HCT116 (cell line): ENCODE measurements at regions of chr17 and their contacts with region 1.

Region 1: GRCh38 chr17:67475236-67475937 is 98.3 kb downstream of the PITPNC1 start:
- DNase-seq: peak; percentile 75
- ATAC-seq: peak; percentile 91
- H3K4me3 ChIP-seq: no peak overlapping the region
- H3K27ac ChIP-seq: no peak overlapping the region
- H3K4me1 ChIP-seq: peaks cover 13 to 49% of the 10 kb centered on the region in 2 experiments
- H3K27me3 ChIP-seq: no peaks in the 10 kb centered on the region
- CTCF ChIP-seq: peak; percentile 97 to 100 (median 100)
- POLR2A ChIP-seq: no peak
- RAD21 ChIP-seq: peak; percentile 98

Region 2: GRCh38 chr17:67353161-67353560 is 122.2 kb before region 1 on chr17:
- CTCF ChIA-PET with region 1: no interaction called
- POLR2A ChIA-PET with region 1: no interaction called
- RAD21 ChIA-PET with region 1: no interaction called
- intact Hi-C with region 1: no loop called
- DNase-seq: no peak
- ATAC-seq: no peak
- H3K4me3 ChIP-seq: no peak overlapping the region
- H3K27ac ChIP-seq: no peak overlapping the region
- H3K4me1 ChIP-seq: no peaks in the 10 kb centered on the region
- H3K27me3 ChIP-seq: no peaks in the 10 kb centered on the region
- CTCF ChIP-seq: no peak
- POLR2A ChIP-seq: no peak
- RAD21 ChIP-seq: no peak

Region 3: DNA sequence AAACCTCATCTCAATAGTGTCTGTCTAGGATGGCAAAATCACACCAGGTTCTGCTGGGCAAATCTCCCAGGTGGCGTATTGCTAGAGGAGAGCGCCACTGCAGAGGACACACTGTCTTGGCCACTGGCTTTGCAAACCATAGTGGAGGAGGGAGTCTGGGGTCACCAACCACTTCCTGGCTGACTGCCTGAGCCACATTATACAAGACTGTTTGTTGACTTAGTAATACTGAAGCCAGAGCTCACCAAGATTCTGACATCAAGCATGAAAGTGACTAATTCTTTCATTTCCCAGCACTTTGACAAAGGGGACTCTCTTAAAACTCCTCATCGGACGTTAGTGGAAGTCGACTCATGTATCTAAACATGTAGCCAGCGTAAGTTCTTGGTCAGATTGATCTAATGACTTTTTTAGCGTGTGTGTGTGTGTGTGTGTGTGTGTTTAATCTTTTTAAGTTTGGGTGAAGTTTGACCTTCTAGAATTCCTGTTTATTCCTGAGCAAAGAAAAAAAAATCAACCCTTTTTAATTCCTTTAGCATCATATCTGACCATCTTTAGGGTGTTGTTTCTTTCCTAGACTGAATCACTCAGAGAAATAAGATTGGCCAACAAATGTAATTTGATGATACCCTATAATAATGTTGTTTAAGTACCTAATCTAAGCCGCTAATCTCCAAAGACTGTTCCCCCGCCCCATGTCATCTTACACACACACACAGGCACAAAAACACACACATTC is 84.6 kb before region 1 on chr17:
- CTCF ChIA-PET with region 1: interaction called, 50 read pairs
- POLR2A ChIA-PET with region 1: interaction called, 4 read pairs
- RAD21 ChIA-PET with region 1: interaction called, 4 to 7 read pairs
- intact Hi-C with region 1: loop called (anchors 1 kb)
- DNase-seq: peak; percentile 89
- ATAC-seq: peak; percentile 80
- H3K4me3 ChIP-seq: peak overlapping the region in 1 of 2 experiments; percentile 36; a peak in 2 of 4 replicates
- H3K27ac ChIP-seq: peak overlapping the region; percentile 54
- H3K4me1 ChIP-seq: peaks cover 26 to 58% of the 10 kb centered on the region in 2 experiments
- H3K27me3 ChIP-seq: no peaks in the 10 kb centered on the region
- CTCF ChIP-seq: no peak
- POLR2A ChIP-seq: no peak
- RAD21 ChIP-seq: peak; percentile 36; the same call in 1 of the 2 replicates

Region 4: DNA sequence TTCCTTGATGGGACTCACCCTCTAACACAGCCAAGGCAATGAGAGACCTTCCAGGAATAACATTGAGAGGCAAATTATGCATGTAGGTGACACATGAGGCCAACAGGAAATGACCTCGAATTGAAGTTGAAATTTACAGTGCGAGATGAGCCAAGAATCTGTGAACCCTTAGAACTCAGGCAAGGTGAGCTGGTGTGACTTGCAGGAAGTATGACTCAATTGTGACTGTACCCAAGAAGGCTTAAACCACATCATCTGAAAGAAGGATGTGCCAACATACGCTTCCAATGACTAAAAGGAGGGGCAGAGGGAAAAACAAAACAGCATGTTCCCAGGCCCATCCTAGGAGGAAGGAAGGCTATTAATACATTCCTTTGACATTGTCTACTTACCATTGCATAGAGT is 53.5 kb before region 1 on chr17:
- CTCF ChIA-PET with region 1: interaction called, 10 read pairs
- POLR2A ChIA-PET with region 1: interaction called, 3 read pairs
- RAD21 ChIA-PET with region 1: interaction called, 4 to 8 read pairs
- intact Hi-C with region 1: no loop called
- DNase-seq: peak; percentile 100
- ATAC-seq: peak; percentile 90
- H3K4me3 ChIP-seq: peak overlapping the region; percentile 0 to 31; a peak in 3 of 4 replicates
- H3K27ac ChIP-seq: peak overlapping the region; percentile 95
- H3K4me1 ChIP-seq: peaks cover 72 to 92% of the 10 kb centered on the region in 2 experiments
- H3K27me3 ChIP-seq: no peaks in the 10 kb centered on the region
- CTCF ChIP-seq: no peak
- POLR2A ChIP-seq: no peak
- RAD21 ChIP-seq: peak; percentile 57

Region 5: DNA sequence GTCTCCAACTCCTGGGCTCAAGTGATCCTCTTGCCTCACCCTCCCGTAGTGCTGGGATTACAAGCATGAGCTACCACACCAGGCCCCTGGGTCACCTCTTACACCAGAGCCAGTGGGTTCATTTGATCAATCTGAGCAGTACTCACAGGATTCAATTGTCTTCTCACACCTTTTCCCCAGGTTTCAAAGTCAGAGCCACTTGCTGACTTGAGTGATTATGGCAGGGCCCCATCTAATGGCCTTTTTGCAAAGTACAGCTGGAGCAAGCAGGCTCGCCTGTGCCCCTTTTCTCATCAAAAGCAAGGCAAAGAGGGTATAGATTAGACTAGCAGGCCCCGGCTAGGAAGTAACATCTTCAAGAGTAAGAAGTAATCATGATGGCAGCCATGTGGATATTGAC is 127.6 kb after region 1 on chr17:
- CTCF ChIA-PET with region 1: interaction called, 21 read pairs
- POLR2A ChIA-PET with region 1: no interaction called
- RAD21 ChIA-PET with region 1: no interaction called
- intact Hi-C with region 1: loop called (anchors 2 kb)
- DNase-seq: peak; percentile 56
- ATAC-seq: peak; percentile 93
- H3K4me3 ChIP-seq: no peak overlapping the region
- H3K27ac ChIP-seq: no peak overlapping the region
- H3K4me1 ChIP-seq: no peaks in the 10 kb centered on the region; a peak in 2 of 4 replicates
- H3K27me3 ChIP-seq: no peaks in the 10 kb centered on the region
- CTCF ChIP-seq: peak; percentile 77 to 94 (median 83)
- POLR2A ChIP-seq: no peak
- RAD21 ChIP-seq: peak; percentile 97

Region 6: DNA sequence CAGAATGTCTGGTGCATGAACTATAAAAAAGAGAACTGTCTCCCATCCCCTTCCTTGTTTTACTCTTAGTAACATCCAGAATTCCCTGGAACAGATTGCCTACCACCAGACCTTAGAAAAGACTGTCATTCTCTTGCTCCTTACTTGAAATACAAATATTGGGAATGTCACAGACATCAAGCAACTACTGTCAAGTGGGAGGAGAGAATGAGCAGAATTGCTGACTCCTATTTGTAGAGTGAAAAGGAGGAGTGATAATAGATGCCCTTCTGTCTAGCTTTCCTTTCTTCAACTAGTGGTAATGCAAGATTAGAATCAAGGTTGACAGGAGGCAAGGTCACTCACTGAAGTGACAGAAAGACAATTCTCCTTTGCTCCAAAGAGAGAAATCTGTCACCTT is 218.4 kb after region 1 on chr17:
- CTCF ChIA-PET with region 1: no interaction called
- POLR2A ChIA-PET with region 1: no interaction called
- RAD21 ChIA-PET with region 1: no interaction called
- intact Hi-C with region 1: no loop called
- DNase-seq: no peak
- ATAC-seq: no peak
- H3K4me3 ChIP-seq: no peak overlapping the region
- H3K27ac ChIP-seq: no peak overlapping the region
- H3K4me1 ChIP-seq: no peaks in the 10 kb centered on the region
- H3K27me3 ChIP-seq: no peaks in the 10 kb centered on the region
- CTCF ChIP-seq: no peak
- POLR2A ChIP-seq: no peak
- RAD21 ChIP-seq: no peak